Natural killer cell (primary cell): ENCODE measurements at regions of chr13 and their contacts with region 1.

Region 1: GRCh38 chr13:67230404-67231288 is 510 bp upstream of the PCDH9 start:
- DNase-seq: peak; percentile 86
- ATAC-seq: peak; percentile 90 to 94 (median 93)
- H3K4me3 ChIP-seq: peak overlapping the region; percentile 87
- H3K4me3 Mint-ChIP-seq: no peak overlapping the region
- H3K27ac ChIP-seq: peak overlapping the region; percentile 51
- H3K27ac Mint-ChIP-seq: no peak overlapping the region
- H3K4me1 ChIP-seq: peaks cover 16% of the 10 kb centered on the region
- H3K4me1 Mint-ChIP-seq: peaks cover 0 to 11% of the 10 kb centered on the region in 2 donors
- H3K27me3 ChIP-seq: no peaks in the 10 kb centered on the region
- H3K27me3 Mint-ChIP-seq: peaks cover 0 to 13% of the 10 kb centered on the region in 2 donors
- CTCF ChIP-seq: no peak

Region 2: GRCh38 chr13:65926750-65927171 is 1303.9 kb before region 1 on chr13:
- intact Hi-C with region 1: loop called (anchors 5 kb)
- DNase-seq: no peak
- ATAC-seq: peak; percentile 41 to 72 (median 61)
- H3K4me3 ChIP-seq: no peak overlapping the region
- H3K4me3 Mint-ChIP-seq: no peak overlapping the region
- H3K27ac ChIP-seq: no peak overlapping the region
- H3K27ac Mint-ChIP-seq: no peak overlapping the region
- H3K4me1 ChIP-seq: no peaks in the 10 kb centered on the region
- H3K4me1 Mint-ChIP-seq: peaks cover 2 to 6% of the 10 kb centered on the region in 2 donors
- H3K27me3 ChIP-seq: no peaks in the 10 kb centered on the region
- H3K27me3 Mint-ChIP-seq: peaks cover 0 to under 1% of the 10 kb centered on the region in 2 donors
- CTCF ChIP-seq: peak; percentile 20

Region 3: GRCh38 chr13:67841071-67841470 is 610.4 kb after region 1 on chr13:
- intact Hi-C with region 1: no loop called
- DNase-seq: no peak
- ATAC-seq: no peak
- H3K4me3 ChIP-seq: no peak overlapping the region
- H3K4me3 Mint-ChIP-seq: no peak overlapping the region
- H3K27ac ChIP-seq: no peak overlapping the region
- H3K27ac Mint-ChIP-seq: no peak overlapping the region
- H3K4me1 ChIP-seq: no peaks in the 10 kb centered on the region
- H3K4me1 Mint-ChIP-seq: no peaks in the 10 kb centered on the region
- H3K27me3 ChIP-seq: no peaks in the 10 kb centered on the region
- H3K27me3 Mint-ChIP-seq: no peaks in the 10 kb centered on the region
- CTCF ChIP-seq: no peak